CD8-positive, alpha-beta memory T cell (primary cell): ENCODE measurements at regions of chr2 and their contacts with region 1.

Region 1: GRCh38 chr2:7427293-7428060 is 510.3 kb downstream of the RNF144A start:
- DNase-seq: peak in 2 of 5 donors; percentile 59 to 67
- H3K4me3 ChIP-seq: no peak overlapping the region
- H3K4me3 Mint-ChIP-seq: peak overlapping the region in 6 of 7 donors; percentile 4 to 63 (median 44)
- H3K27ac ChIP-seq: no peak overlapping the region
- H3K27ac Mint-ChIP-seq: peak overlapping the region; percentile 12 to 84 (median 47)
- H3K4me1 ChIP-seq: peaks cover 36% of the 10 kb centered on the region
- H3K4me1 Mint-ChIP-seq: peaks cover 39 to 52% (median 46%) of the 10 kb centered on the region in 3 donors
- H3K27me3 ChIP-seq: no peaks in the 10 kb centered on the region
- H3K27me3 Mint-ChIP-seq: peaks cover 3 to 4% of the 10 kb centered on the region in 2 donors

Region 2: GRCh38 chr2:7567646-7568045 is 140.2 kb after region 1 on chr2:
- CTCF ChIA-PET with region 1: interaction called, 13 read pairs
- POLR2A ChIA-PET with region 1: interaction called, 11 read pairs
- DNase-seq: peak in 4 of 5 donors; percentile 2 to 83 (median 71)
- H3K4me3 ChIP-seq: peak overlapping the region; percentile 11
- H3K4me3 Mint-ChIP-seq: peak overlapping the region in 6 of 7 donors; percentile 24 to 79 (median 64)
- H3K27ac ChIP-seq: no peak overlapping the region
- H3K27ac Mint-ChIP-seq: peak overlapping the region; percentile 55 to 96 (median 86)
- H3K4me1 ChIP-seq: peaks cover 48% of the 10 kb centered on the region
- H3K4me1 Mint-ChIP-seq: peaks cover 36 to 65% (median 53%) of the 10 kb centered on the region in 3 donors
- H3K27me3 ChIP-seq: no peaks in the 10 kb centered on the region
- H3K27me3 Mint-ChIP-seq: peaks cover 0 to 1% of the 10 kb centered on the region in 2 donors

Region 3: DNA sequence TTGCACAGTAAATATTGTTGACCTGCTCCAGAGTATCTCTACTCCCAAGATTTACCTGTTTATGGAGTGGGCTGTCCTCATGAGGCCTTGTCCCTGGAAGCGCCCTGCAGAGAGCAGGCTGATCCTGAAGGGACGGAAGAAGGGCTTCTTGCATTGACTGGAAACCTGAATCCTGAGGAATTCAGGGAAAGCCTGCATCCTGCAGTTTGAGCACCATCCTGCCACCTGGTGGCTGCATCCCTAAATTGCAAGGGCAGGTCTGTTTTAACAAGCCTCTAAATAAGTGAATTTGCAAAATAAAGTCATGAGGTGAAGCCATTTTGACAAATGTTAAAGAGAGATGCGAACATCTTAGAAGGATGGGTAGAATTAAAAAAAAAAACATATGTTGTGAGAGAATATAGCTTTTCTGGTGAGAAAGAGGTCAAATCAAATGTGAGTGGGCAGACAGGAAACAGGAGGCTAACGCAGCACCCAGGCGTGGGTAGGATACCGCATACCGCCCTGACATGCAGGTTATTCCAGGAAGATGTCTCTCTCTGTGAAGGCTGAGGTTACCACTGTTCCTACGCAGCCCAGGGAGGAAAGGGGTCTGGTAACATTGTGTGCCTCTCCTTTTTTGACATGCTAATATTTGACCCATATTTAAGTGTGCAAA is 244.7 kb after region 1 on chr2:
- CTCF ChIA-PET with region 1: interaction called, 32 read pairs
- POLR2A ChIA-PET with region 1: no interaction called
- DNase-seq: peak; percentile 13 to 63 (median 53)
- H3K4me3 ChIP-seq: peak overlapping the region; percentile 13
- H3K4me3 Mint-ChIP-seq: peak overlapping the region; percentile 1 to 79 (median 70)
- H3K27ac ChIP-seq: no peak overlapping the region
- H3K27ac Mint-ChIP-seq: peak overlapping the region; percentile 43 to 93 (median 89)
- H3K4me1 ChIP-seq: peaks cover 21% of the 10 kb centered on the region
- H3K4me1 Mint-ChIP-seq: peaks cover 26 to 39% (median 32%) of the 10 kb centered on the region in 3 donors
- H3K27me3 ChIP-seq: no peaks in the 10 kb centered on the region
- H3K27me3 Mint-ChIP-seq: no peaks in the 10 kb centered on the region

Region 4: GRCh38 chr2:7730449-7730848 is 303.0 kb after region 1 on chr2:
- CTCF ChIA-PET with region 1: interaction called, 11 read pairs
- POLR2A ChIA-PET with region 1: interaction called, 9 read pairs
- DNase-seq: peak in 2 of 5 donors; percentile 28 to 56
- H3K4me3 ChIP-seq: peak overlapping the region; percentile 65
- H3K4me3 Mint-ChIP-seq: peak overlapping the region; percentile 84 to 93 (median 89)
- H3K27ac ChIP-seq: peak overlapping the region; percentile 47
- H3K27ac Mint-ChIP-seq: peak overlapping the region; percentile 90 to 99 (median 98)
- H3K4me1 ChIP-seq: peaks cover 31% of the 10 kb centered on the region
- H3K4me1 Mint-ChIP-seq: peaks cover 68 to 85% (median 75%) of the 10 kb centered on the region in 3 donors
- H3K27me3 ChIP-seq: no peaks in the 10 kb centered on the region
- H3K27me3 Mint-ChIP-seq: no peaks in the 10 kb centered on the region

Region 5: GRCh38 chr2:7740114-7740513 is 312.6 kb after region 1 on chr2:
- CTCF ChIA-PET with region 1: interaction called, 29 read pairs
- POLR2A ChIA-PET with region 1: interaction called, 4 read pairs
- DNase-seq: no peak
- H3K4me3 ChIP-seq: no peak overlapping the region
- H3K4me3 Mint-ChIP-seq: peak overlapping the region in 2 of 7 donors; percentile 30 to 32
- H3K27ac ChIP-seq: no peak overlapping the region
- H3K27ac Mint-ChIP-seq: peak overlapping the region; percentile 57 to 91 (median 85)
- H3K4me1 ChIP-seq: peaks cover 7% of the 10 kb centered on the region
- H3K4me1 Mint-ChIP-seq: peaks cover 75 to 95% (median 93%) of the 10 kb centered on the region in 3 donors
- H3K27me3 ChIP-seq: no peaks in the 10 kb centered on the region
- H3K27me3 Mint-ChIP-seq: peaks cover 0 to 2% of the 10 kb centered on the region in 2 donors